Activated naive CD4-positive, alpha-beta T cell treated with anti-CD3 and anti-CD28 coated beads, Interleukin-2, amount 10 ng/mL, durations not matched to agents 7 days and 5 days (primary cell): ENCODE measurements at regions of chr7 and their contacts with region 1.

Region 1: GRCh38 chr7:93245525-93246432 is 13.6 kb downstream of the VPS50 start:
- DNase-seq: no peak
- H3K4me3 Mint-ChIP-seq: no peak overlapping the region
- H3K27ac Mint-ChIP-seq: no peak overlapping the region
- H3K4me1 Mint-ChIP-seq: no peaks in the 10 kb centered on the region
- H3K27me3 Mint-ChIP-seq: no peaks in the 10 kb centered on the region

Region 2: DNA sequence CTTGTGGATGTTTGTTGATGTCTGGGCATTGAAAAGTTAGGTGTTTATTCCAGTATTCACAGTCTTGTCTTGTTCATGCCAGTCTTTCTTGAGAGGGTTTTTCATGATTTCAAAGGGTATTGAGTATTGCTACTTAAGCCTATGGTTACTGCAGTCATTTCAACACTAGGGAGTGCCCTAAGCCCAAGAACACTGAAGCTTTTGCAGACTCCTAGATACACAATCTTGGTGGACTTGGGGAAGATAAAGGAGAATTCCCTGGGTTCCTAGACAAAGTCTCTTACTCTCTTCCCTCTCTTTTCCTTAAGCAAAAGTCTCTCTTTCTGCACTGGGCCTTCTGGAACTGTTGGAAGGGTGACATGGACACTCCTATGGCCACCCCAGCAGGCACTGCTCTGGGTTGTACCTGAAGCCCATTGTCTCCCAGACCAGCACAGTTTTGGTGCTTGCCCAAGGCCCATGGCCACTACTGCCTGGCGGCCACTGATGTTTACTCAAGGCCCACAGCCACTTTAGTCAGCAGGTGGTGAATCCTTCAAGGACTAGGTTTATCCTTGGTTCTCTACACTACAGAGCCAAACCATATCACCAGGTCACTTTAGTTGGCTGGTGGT is 152.9 kb before region 1 on chr7:
- CTCF ChIA-PET with region 1: no interaction called
- DNase-seq: peak; percentile 26
- H3K4me3 Mint-ChIP-seq: no peak overlapping the region
- H3K27ac Mint-ChIP-seq: no peak overlapping the region
- H3K4me1 Mint-ChIP-seq: no peaks in the 10 kb centered on the region
- H3K27me3 Mint-ChIP-seq: peaks cover 11% of the 10 kb centered on the region

Region 3: GRCh38 chr7:93551063-93551904 is 305.5 kb after region 1 on chr7:
- CTCF ChIA-PET with region 1: interaction called, 31 read pairs
- DNase-seq: no peak
- H3K4me3 Mint-ChIP-seq: no peak overlapping the region
- H3K27ac Mint-ChIP-seq: no peak overlapping the region
- H3K4me1 Mint-ChIP-seq: no peaks in the 10 kb centered on the region
- H3K27me3 Mint-ChIP-seq: no peaks in the 10 kb centered on the region